ENCODE measurements at regions of chr18 and their contacts with region 1.

Region 1: DNA sequence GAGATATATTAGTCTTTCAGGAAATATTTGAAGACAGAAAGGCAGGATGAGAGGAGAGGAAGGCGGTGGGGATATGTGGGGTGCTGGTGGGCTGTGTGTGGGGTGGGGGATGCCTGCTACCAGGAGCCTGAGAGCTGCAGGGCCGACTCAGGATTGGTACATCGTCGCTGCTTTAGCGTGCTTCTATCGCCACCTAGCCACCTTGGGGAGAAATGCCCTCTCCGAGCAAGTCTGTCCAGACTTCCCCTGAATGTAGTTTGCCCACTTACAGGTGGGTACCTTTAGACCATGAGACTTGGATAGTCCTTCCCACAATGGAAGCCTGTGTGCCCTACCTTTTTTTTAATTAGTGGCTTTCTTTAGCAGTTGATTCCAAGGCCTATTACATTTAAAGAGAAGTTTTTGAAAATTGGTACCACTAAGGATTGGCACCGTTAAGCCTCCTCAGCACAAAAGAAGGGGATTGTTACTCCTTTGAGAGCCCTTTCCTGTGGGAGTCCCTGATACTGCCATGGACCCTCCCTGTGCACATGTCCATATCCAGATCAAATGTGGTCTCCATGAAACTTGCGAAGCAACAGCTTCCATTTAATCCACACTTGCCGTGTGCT is 114.1 kb upstream of the NDUFV2 start:
- DNase-seq: no peak
- H3K4me3 ChIP-seq: no peak overlapping the region
- H3K27ac ChIP-seq: peak overlapping the region in 1 of 4 donors; percentile 40
- H3K4me1 ChIP-seq: peaks cover 0 to 30% (median 9%) of the 10 kb centered on the region in 3 donors
- H3K27me3 ChIP-seq: no peaks in the 10 kb centered on the region
- CTCF ChIP-seq: peak; percentile 38 to 76 (median 64)
- POLR2A ChIP-seq: no peak

Region 2: GRCh38 chr18:8654503-8655451 is 333.6 kb before region 1 on chr18:
- intact Hi-C with region 1: loop called (anchors 5 kb)
- DNase-seq: no peak
- H3K4me3 ChIP-seq: no peak overlapping the region
- H3K27ac ChIP-seq: no peak overlapping the region
- H3K4me1 ChIP-seq: peaks cover 0 to 7% (median 3%) of the 10 kb centered on the region in 3 donors
- H3K27me3 ChIP-seq: no peaks in the 10 kb centered on the region
- CTCF ChIP-seq: peak; percentile 59 to 91 (median 81)
- POLR2A ChIP-seq: no peak

Region 3: GRCh38 chr18:8696749-8697211 is 291.6 kb before region 1 on chr18:
- intact Hi-C with region 1: loop called (anchors 10 kb)
- DNase-seq: peak; percentile 12
- H3K4me3 ChIP-seq: no peak overlapping the region
- H3K27ac ChIP-seq: no peak overlapping the region
- H3K4me1 ChIP-seq: peaks cover 0 to 3% (median 0%) of the 10 kb centered on the region in 3 donors
- H3K27me3 ChIP-seq: no peaks in the 10 kb centered on the region
- CTCF ChIP-seq: peak; percentile 86 to 97 (median 90)
- POLR2A ChIP-seq: no peak